GM10248 (cell line): ENCODE measurements at regions of chr1 and their contacts with region 1.

Region 1: DNA sequence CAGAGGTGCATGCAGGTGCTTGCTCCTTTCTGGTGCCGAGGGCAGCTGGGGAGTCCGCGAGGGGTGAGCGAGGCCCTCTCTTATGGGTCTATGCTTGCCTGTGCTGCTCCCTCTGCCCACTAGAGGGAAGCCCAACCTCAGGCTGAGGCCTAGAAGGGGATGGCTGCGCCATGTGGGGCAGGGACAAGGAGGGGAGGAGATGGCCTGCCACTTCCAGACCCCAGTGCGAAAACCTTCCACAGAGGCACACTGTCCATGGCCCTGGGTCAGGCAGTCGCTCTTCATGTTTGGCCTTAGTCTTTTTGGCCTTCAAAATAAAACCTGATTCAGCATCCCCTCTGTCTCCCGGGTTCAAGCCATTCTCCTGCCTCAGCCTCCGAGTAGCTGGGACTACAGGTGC is 14.0 kb downstream of the RHBG start:
- DNase-seq: peak; percentile 87
- CTCF ChIP-seq: peak; percentile 97

Region 2: DNA sequence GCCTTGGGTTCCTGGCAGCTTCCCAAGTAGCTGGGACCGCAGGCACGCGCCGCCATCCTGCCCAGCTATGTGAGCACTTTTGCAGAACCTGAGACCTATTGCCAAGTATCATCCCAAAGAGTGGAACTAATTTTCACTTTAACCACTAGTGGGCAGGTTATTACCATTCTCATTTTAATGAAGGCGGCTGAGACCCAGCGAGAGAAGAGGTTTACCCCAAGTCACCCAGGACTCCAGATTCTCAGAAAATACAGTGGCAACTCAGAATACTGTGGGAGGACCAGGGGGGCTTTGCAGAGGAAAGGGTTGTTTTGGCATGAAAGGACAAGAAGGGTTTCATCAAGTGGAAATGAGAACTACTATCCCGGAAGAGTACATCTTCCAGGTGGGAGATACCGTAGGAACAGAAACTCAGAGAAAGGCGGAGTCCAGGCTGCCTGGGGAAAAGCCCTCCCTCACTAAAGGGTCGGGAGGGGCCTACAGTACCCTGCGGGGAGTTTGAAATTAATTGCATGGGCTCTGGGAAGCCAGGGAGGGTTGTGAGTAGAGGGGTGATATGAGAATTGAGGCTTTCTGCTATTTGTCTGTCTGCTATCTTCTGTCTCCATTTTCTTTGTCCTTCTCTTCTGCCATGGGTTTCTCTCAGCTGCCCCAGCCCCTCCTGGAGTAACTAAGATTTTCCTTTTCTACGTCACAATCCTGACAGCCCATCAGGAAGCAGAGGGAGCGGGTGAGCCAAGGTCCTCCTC is 236.8 kb before region 1 on chr1:
- CTCF ChIA-PET with region 1: no interaction called
- POLR2A ChIA-PET with region 1: no interaction called
- DNase-seq: peak; percentile 81
- CTCF ChIP-seq: peak; percentile 69

Region 3: DNA sequence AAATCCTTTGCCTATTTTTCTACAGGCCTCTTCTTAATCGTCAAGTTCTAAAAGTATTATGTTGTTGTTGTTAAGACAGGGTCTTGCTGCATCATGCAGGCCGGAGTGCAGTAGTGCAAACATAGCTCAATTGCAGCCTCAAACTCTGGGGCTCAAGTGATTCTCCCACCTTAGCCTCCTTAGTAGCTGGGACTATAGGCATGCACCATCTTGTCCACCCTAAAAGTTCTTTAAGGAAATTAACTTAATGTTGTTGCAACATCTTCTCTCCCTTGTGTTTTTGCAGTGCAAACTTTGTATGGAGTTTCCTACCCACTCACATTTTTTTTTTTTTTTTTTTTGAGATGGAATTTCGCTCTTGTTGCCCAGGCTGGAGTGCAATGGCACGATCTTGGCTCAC is 79.8 kb before region 1 on chr1:
- CTCF ChIA-PET with region 1: no interaction called
- POLR2A ChIA-PET with region 1: no interaction called
- DNase-seq: no peak
- CTCF ChIP-seq: no peak

Region 4: GRCh38 chr1:156368889-156369684 is 13.9 kb before region 1 on chr1 and contains the start of gene RHBG:
- CTCF ChIA-PET with region 1: interaction called, 89 read pairs
- POLR2A ChIA-PET with region 1: no interaction called
- DNase-seq: no peak
- CTCF ChIP-seq: no peak

Region 5: DNA sequence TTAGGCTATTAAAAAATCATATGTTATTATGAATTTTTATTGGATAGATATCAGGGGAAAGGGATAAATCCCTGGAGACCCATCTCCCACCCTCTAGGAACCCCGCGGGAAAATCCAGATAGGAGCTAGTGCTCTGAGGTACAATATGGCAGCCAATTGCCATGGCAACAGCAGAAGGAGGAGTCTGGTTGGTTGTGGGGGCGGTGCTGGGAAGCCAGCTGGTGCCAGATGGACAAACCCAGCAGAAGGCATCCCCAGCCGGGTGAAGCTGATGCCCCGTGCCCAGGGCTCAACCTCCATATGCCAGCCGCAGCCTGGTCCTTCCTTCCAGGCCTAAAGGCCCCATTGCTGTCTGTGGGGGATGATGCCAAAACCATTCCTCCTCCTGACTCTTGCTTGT is 24.3 kb after region 1 on chr1:
- CTCF ChIA-PET with region 1: interaction called, 88 read pairs
- POLR2A ChIA-PET with region 1: no interaction called
- DNase-seq: no peak
- CTCF ChIP-seq: no peak

Region 6: GRCh38 chr1:156421062-156421938 is 38.3 kb after region 1 on chr1:
- CTCF ChIA-PET with region 1: interaction called, 60 read pairs
- POLR2A ChIA-PET with region 1: interaction called, 3 read pairs
- DNase-seq: peak; percentile 95
- CTCF ChIP-seq: no peak

Region 7: GRCh38 chr1:156456622-156457465 is 73.8 kb after region 1 on chr1:
- CTCF ChIA-PET with region 1: interaction called, 480 read pairs
- POLR2A ChIA-PET with region 1: no interaction called
- DNase-seq: peak; percentile 98
- CTCF ChIP-seq: no peak

Region 8: GRCh38 chr1:156608036-156608674 is 225.1 kb after region 1 on chr1:
- CTCF ChIA-PET with region 1: interaction called, 16 read pairs
- POLR2A ChIA-PET with region 1: no interaction called
- DNase-seq: peak; percentile 70
- CTCF ChIP-seq: peak; percentile 74